Transverse colon (tissue), 4 donors: ENCODE measurements at regions of chr12 and their contacts with region 1.

Region 1: GRCh38 chr12:26113853-26114719 is 10.8 kb downstream of the BHLHE41 start:
- DNase-seq: peak; percentile 97
- H3K4me3 ChIP-seq: peak overlapping the region; percentile 36 to 58 (median 48)
- H3K27ac ChIP-seq: peak overlapping the region; percentile 85 to 94 (median 88)
- H3K4me1 ChIP-seq: peaks cover 9 to 28% (median 18%) of the 10 kb centered on the region in 4 donors
- H3K27me3 ChIP-seq: no peaks in the 10 kb centered on the region
- CTCF ChIP-seq: peak in 4 of 5 experiments; percentile 36 to 66 (median 56)
- EP300 ChIP-seq: peak; percentile 52
- POLR2A ChIP-seq: peak; percentile 75

Region 2: DNA sequence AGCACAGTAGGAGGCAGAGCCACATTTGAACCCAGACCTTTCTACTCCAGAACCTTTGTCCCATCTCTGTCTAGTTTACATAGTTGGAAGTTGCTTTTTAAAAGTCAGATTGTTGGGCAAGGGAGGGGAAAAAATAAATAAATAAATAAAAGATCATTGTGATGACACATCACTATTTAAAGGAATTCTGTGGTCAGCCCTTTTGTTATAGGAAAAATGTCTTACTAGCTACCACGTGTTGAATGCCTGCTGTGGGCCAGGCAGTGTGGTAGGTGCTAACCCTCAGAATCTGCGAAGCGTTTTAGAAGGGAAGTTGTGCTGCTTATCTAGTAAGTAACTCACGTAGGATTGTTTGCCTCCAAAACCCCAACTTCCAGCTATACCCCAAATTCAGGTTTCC is 51.5 kb before region 1 on chr12:
- in situ Hi-C with region 1: no loop called
- intact Hi-C with region 1: no loop called
- DNase-seq: no peak
- H3K4me3 ChIP-seq: no peak overlapping the region
- H3K27ac ChIP-seq: no peak overlapping the region
- H3K4me1 ChIP-seq: no peaks in the 10 kb centered on the region
- H3K27me3 ChIP-seq: no peaks in the 10 kb centered on the region
- CTCF ChIP-seq: no peak
- EP300 ChIP-seq: no peak
- POLR2A ChIP-seq: no peak

Region 3: GRCh38 chr12:26402648-26403047 is 288.6 kb after region 1 on chr12:
- in situ Hi-C with region 1: loop called in 2 of 4 experiments (anchors 25 kb)
- intact Hi-C with region 1: no loop called
- DNase-seq: peak; percentile 46
- H3K4me3 ChIP-seq: no peak overlapping the region
- H3K27ac ChIP-seq: no peak overlapping the region
- H3K4me1 ChIP-seq: no peaks in the 10 kb centered on the region
- H3K27me3 ChIP-seq: no peaks in the 10 kb centered on the region
- CTCF ChIP-seq: peak; percentile 28 to 68 (median 45)
- EP300 ChIP-seq: no peak
- POLR2A ChIP-seq: no peak

Region 4: DNA sequence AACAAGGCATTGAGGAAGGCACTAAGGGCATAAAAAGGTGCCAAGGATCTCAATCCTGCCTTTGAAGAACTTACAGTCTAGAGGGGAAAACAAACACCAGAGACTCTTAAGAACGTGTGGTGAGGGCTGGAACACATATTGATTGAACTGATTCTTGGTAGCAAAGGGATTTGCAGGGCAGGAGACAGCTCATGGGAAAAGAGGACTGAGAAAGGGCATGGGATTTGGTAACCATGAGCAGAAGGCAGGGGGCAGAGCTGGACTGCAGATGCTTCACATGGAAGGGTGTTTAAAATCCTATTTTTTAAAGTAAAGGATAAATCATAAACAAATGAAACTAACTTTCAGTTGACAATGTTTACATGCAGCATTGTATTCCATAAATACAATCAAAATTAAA is 515.8 kb after region 1 on chr12:
- in situ Hi-C with region 1: loop called in 1 of 4 experiments (anchors 25 kb)
- intact Hi-C with region 1: no loop called
- DNase-seq: no peak
- H3K4me3 ChIP-seq: no peak overlapping the region
- H3K27ac ChIP-seq: peak overlapping the region in 2 of 4 donors; percentile 38 to 52
- H3K4me1 ChIP-seq: peaks cover 0 to 4% (median 0%) of the 10 kb centered on the region in 4 donors
- H3K27me3 ChIP-seq: no peaks in the 10 kb centered on the region
- CTCF ChIP-seq: peak in 4 of 5 experiments; percentile 14 to 36 (median 24)
- EP300 ChIP-seq: no peak
- POLR2A ChIP-seq: no peak